PC-9 (cell line): ENCODE measurements at regions of chr7 and their contacts with region 1.

Region 1: DNA sequence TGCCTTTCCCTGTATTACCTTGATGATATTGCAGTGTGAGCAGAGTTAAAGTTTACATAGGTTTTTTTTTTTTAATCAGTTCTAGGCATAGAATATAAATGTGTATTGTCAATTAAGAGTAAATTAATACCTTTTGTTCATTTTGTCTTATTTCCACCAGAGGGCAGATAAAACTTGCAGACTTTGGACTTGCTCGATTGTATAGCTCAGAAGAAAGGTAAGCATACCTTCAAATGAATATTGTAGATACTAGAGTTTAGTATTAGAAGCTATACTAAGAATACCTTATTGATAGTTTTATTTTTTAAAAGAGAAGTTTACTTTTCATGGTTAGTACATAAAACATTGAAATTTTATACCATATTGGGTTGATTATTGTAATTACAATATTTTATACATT is 86.8 kb downstream of the MPLKIP start:
- DNase-seq: no peak
- H3K4me3 ChIP-seq: no peak overlapping the region
- H3K27ac ChIP-seq: no peak overlapping the region
- H3K4me1 ChIP-seq: no peaks in the 10 kb centered on the region
- H3K27me3 ChIP-seq: no peaks in the 10 kb centered on the region
- CTCF ChIP-seq: peak; percentile 53; the same call in 1 of the 2 replicates

Region 2: DNA sequence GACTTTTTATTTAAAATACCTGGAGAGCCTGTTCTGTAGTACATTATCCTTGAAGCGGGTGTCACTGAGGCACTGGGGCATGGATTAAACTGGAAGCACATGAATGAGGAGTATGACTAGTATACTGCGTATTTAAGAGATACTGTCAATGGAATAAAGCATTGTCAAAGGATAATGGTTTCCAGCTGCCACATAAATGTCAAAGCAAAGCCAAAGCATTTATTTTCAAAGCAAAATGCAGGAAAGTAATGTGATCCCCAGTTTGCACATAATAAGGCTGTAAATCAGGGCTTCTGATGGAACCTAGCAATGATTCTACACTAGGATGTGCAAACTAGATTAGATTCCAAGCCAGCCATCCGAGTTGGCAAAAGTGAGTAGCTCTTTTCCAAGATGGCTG is 829.9 kb before region 1 on chr7:
- CTCF ChIA-PET with region 1: no interaction called
- POLR2A ChIA-PET with region 1: no interaction called
- intact Hi-C with region 1: no loop called
- DNase-seq: no peak
- H3K4me3 ChIP-seq: no peak overlapping the region
- H3K27ac ChIP-seq: no peak overlapping the region
- H3K4me1 ChIP-seq: no peaks in the 10 kb centered on the region
- H3K27me3 ChIP-seq: peaks cover 22% of the 10 kb centered on the region; the same call in 1 of the 2 replicates
- CTCF ChIP-seq: no peak

Region 3: DNA sequence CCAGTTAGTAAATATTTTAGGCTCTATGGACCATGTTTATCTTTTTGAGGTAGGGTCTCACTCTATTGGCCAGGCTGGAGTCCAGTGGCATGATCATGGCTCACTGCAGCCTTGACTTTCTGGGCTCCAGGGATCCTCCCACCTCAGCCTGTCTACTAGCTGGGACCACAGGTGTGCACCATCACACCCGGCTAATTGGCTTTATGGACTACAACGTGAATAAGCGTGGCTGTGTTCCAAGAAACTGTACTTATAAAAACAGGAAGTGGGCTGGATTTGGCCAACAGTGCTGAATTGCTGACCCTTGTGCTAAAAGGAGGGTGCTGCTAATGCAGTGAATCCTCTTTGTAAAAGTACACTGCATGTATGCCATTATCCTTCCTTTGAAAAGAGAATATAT is 209.3 kb before region 1 on chr7:
- CTCF ChIA-PET with region 1: no interaction called
- POLR2A ChIA-PET with region 1: no interaction called
- intact Hi-C with region 1: no loop called
- DNase-seq: peak; percentile 26 to 41
- H3K4me3 ChIP-seq: no peak overlapping the region
- H3K27ac ChIP-seq: no peak overlapping the region
- H3K4me1 ChIP-seq: peaks cover 6% of the 10 kb centered on the region; the same call in 1 of the 2 replicates
- H3K27me3 ChIP-seq: no peaks in the 10 kb centered on the region
- CTCF ChIP-seq: no peak

Region 4: DNA sequence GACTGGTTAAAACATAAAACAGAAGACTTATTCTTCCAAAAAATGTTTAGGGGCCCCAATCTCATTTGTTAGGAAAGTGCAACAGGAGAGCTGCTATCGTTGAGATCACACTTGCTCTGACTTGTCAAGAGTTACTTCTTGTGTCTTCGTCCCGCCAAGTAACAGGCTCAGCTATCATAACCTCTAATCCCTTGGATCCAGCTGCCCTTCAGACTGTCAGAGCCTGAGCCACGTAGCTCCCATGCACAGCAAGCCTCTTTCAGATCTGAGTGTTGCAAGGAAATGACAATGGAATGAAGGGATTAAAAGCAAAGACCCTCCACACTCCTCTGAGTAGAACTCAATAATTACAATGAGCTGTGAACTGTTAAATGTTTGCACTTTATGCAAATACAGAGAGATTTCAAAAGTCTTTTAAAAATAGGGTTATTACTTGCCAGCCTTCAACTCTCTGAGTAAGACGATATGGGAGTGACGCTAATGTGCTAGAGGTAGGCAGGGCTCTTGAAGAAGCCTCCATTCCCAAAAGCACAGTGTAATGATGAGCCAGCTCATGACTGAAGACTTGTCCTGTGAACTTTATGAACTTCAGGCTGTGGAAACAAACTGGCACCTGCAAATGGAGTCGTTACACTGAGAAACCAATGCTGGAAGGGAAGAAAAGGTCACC is 126.0 kb before region 1 on chr7:
- CTCF ChIA-PET with region 1: no interaction called
- POLR2A ChIA-PET with region 1: no interaction called
- intact Hi-C with region 1: no loop called
- DNase-seq: no peak
- H3K4me3 ChIP-seq: no peak overlapping the region
- H3K27ac ChIP-seq: no peak overlapping the region
- H3K4me1 ChIP-seq: no peaks in the 10 kb centered on the region
- H3K27me3 ChIP-seq: no peaks in the 10 kb centered on the region
- CTCF ChIP-seq: no peak

Region 5: DNA sequence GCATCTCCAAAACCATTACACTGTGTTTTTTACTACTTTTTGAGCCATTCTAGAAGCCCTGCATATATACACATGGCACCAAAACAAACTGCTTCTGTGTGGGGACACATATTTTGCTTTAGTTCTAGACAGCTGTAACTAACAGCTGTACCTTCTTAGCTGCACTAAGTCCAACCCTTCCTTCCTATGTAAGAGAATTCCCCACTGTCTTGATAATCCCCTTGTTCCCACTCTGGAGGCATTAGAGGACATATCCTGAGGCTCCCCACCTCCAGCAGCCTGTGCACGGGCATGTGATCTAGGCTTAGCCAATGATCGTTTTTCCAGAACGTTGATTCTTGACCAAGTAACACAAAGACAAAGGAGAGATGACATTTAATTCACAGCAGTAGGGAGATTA is 110.9 kb before region 1 on chr7:
- CTCF ChIA-PET with region 1: interaction called, 18 read pairs
- POLR2A ChIA-PET with region 1: no interaction called
- intact Hi-C with region 1: no loop called
- DNase-seq: no peak
- H3K4me3 ChIP-seq: no peak overlapping the region
- H3K27ac ChIP-seq: no peak overlapping the region
- H3K4me1 ChIP-seq: no peaks in the 10 kb centered on the region
- H3K27me3 ChIP-seq: no peaks in the 10 kb centered on the region
- CTCF ChIP-seq: no peak

Region 6: DNA sequence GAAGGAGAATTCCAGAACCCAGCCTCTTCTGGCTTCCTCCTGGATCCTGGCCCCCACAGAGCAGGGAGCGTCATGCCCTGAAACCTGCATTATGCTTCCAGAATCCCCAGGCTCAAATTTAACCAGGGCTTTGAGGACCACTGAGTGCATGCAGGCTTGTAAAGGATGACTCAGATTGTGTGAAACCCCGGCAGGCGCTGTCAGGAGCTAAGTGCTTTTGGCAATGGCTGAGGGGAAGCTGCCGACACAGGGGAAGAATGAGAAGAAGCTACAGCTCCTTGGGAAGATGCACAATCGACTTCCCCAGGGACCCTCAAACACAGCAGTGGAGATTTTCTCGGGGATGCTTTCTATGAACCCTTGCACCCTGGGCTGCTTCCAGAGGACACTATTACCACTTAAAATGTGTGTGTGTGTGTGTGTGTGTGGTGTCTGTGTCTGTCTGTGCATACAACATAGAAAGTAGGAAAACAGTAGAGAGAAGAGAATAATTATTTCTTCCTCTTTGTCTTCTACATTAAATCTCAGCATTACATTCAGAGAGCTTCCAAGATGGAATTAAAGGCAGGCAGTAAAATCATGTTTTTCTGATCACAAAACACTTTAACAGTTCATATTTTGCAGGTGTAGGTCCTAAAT is 1838.7 kb after region 1 on chr7:
- CTCF ChIA-PET with region 1: interaction called, 10 read pairs
- POLR2A ChIA-PET with region 1: no interaction called
- intact Hi-C with region 1: no loop called
- DNase-seq: no peak
- H3K4me3 ChIP-seq: no peak overlapping the region
- H3K27ac ChIP-seq: no peak overlapping the region
- H3K4me1 ChIP-seq: no peaks in the 10 kb centered on the region
- H3K27me3 ChIP-seq: no peaks in the 10 kb centered on the region
- CTCF ChIP-seq: no peak